ENCODE measurements at regions of chr15 and their contacts with region 1.

Region 1: GRCh38 chr15:78811124-78811824 is at the start of gene ADAMTS7:
- DNase-seq: peak; percentile 62
- ATAC-seq: peak; percentile 92
- H3K4me3 ChIP-seq: peak within 1 kb of the TSS; percentile 11 to 71 (median 52)
- H3K4me3 Mint-ChIP-seq: peak within 1 kb of the TSS; percentile 90
- H3K27ac ChIP-seq: no peak within 1 kb of the TSS
- H3K27ac Mint-ChIP-seq: peak within 1 kb of the TSS; percentile 69
- H3K4me1 ChIP-seq: peaks cover 15 to 21% of the 10 kb centered on the region in 2 donors
- H3K4me1 Mint-ChIP-seq: peaks cover 16% of the 10 kb centered on the region
- H3K27me3 ChIP-seq: peaks cover 0 to 43% (median 15%) of the 10 kb centered on the region in 4 experiments
- H3K27me3 Mint-ChIP-seq: peaks cover 21% of the 10 kb centered on the region
- CTCF ChIP-seq: peak; percentile 74
- total RNA-seq, gene ADAMTS7: 16.6 and 18.0 TPM in 2 replicates

Region 2: GRCh38 chr15:78618490-78618934 is 192.8 kb before region 1 on chr15:
- CTCF ChIA-PET with region 1: no interaction called
- POLR2A ChIA-PET with region 1: no interaction called
- intact Hi-C with region 1: loop called (anchors 1 kb)
- DNase-seq: peak; percentile 82
- ATAC-seq: peak; percentile 66
- H3K4me3 ChIP-seq: no peak overlapping the region
- H3K4me3 Mint-ChIP-seq: peak overlapping the region; percentile 37
- H3K27ac ChIP-seq: no peak overlapping the region
- H3K27ac Mint-ChIP-seq: no peak overlapping the region
- H3K4me1 ChIP-seq: peaks cover 4 to 13% of the 10 kb centered on the region in 2 donors
- H3K4me1 Mint-ChIP-seq: peaks cover 4% of the 10 kb centered on the region
- H3K27me3 ChIP-seq: peaks cover 0 to 32% (median 13%) of the 10 kb centered on the region in 4 experiments
- H3K27me3 Mint-ChIP-seq: peaks cover 34% of the 10 kb centered on the region
- CTCF ChIP-seq: peak; percentile 86

Region 3: DNA sequence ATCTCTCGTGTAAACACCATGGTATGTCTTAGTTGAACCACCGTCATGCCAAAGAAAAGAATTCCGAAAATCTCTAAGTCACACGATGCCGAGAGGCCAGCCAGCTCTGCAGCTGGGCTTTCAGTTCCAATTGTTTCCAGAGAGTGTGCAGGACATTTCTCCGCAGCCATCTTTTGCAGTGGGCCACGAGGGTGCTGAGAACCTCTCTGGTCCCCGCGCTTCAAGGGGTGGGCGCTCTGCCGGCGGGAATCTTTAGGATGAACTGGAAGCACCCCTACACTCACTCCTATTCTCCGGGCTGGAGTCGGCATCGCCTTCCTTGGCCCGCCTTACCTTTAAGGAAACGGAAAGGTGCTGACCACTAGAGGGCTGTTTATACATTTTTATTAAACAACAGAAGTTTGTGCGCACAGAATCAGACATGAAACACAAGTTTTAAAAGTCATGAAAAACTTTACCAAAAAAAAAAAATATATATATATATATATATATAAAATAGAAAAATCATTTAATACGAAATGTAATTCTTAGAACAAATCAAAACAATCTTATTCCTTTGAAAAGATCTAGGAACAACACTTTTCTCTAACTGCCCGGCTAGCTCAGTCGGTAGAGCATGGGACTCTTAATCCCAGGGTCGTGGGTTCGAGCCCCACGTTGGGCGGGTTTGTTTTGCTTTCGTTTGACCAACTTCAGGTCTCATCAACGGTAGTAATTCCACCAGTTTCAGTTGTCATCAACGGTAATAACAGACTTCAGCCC is 48.9 kb after region 1 on chr15:
- CTCF ChIA-PET with region 1: interaction called, 5 read pairs
- POLR2A ChIA-PET with region 1: no interaction called
- intact Hi-C with region 1: loop called (anchors 2 kb)
- DNase-seq: peak; percentile 82
- ATAC-seq: peak; percentile 81
- H3K4me3 ChIP-seq: peak overlapping the region; percentile 25 to 81 (median 53)
- H3K4me3 Mint-ChIP-seq: peak overlapping the region; percentile 81
- H3K27ac ChIP-seq: no peak overlapping the region
- H3K27ac Mint-ChIP-seq: peak overlapping the region; percentile 92
- H3K4me1 ChIP-seq: peaks cover 3 to 7% of the 10 kb centered on the region in 2 donors
- H3K4me1 Mint-ChIP-seq: peaks cover 7% of the 10 kb centered on the region
- H3K27me3 ChIP-seq: no peaks in the 10 kb centered on the region
- H3K27me3 Mint-ChIP-seq: no peaks in the 10 kb centered on the region
- CTCF ChIP-seq: peak; percentile 77